Activated B cell treated with CpG ODN at 0.5 μM for 24 hours (primary cell): ENCODE measurements at regions of chr16 and their contacts with region 1.

Region 1: DNA sequence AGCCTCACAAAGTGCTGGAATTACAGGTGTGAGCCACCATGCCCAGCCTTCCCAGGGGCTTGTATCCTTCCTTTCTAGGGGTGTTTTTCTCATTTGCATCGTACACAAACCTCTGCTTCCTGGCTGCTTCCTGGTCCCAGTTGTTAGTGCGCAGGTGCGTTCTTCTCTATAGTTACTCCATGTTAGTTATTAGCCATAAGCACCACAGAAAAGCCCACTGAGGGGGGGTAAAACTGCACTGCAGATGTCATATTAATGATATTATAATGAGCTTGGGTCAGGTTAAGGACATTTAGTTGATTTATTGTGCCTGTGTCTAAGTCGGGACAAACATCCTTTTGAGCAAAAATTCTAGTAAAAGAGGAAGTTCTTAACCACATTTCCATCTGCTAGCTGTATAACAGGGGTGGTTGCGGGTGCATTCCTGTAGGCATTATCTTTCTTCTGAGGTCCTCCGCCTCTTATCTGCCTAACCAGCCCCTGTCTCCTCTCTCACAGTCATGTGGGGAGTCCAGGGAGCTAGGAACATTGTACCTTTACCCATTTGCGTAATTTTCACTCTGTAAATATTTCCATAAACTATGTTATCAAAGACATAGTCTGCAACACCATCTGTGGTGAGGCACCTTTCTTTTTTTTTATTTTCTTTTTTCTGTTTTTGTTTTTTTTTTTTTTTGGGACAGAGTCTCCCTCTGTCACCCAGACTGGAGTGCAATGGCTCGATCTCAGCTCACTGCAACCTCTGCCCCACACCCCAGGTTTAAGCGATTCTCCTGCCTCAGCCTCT is 23.6 kb upstream of the ATF7IP2 start:
- DNase-seq: no peak
- ATAC-seq: peak; percentile 84
- H3K4me3 Mint-ChIP-seq: peak overlapping the region; percentile 56
- H3K27ac Mint-ChIP-seq: peak overlapping the region; percentile 50
- H3K4me1 Mint-ChIP-seq: peaks cover 15% of the 10 kb centered on the region
- H3K27me3 Mint-ChIP-seq: no peaks in the 10 kb centered on the region
- CTCF ChIP-seq: no peak

Region 2: DNA sequence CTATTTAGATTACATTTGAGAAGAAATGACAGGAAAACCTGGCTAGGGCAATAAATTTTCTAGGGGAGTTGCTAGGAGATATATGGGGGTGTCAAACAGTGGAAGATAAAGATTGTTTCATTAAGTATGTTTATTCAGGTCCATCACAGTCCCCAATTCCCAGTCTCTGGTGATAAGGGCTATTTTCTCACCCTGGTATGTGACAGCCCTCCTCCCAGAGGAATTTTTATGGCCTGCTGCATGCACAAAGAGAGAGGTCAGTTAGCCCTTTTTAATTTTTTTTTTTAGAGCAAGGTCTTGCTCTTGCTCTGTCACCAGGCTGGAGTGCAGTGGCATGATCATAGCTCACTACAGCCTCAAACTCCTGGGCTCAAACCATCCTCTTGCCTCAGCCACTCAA is 30.0 kb before region 1 on chr16:
- CTCF ChIA-PET with region 1: no interaction called
- POLR2A ChIA-PET with region 1: interaction called, 9 read pairs
- intact Hi-C with region 1: loop called (anchors 2 kb)
- DNase-seq: no peak
- ATAC-seq: no peak
- H3K4me3 Mint-ChIP-seq: no peak overlapping the region
- H3K27ac Mint-ChIP-seq: peak overlapping the region; percentile 46
- H3K4me1 Mint-ChIP-seq: peaks cover 40% of the 10 kb centered on the region
- H3K27me3 Mint-ChIP-seq: no peaks in the 10 kb centered on the region
- CTCF ChIP-seq: no peak